ENCODE measurements at regions of chr2 and their contacts with region 1.

Region 1: GRCh38 chr2:135149251-135149650 is 97.2 kb downstream of the RAB3GAP1 start:
- DNase-seq: no peak
- H3K4me3 Mint-ChIP-seq: no peak overlapping the region
- H3K27ac Mint-ChIP-seq: no peak overlapping the region
- H3K4me1 Mint-ChIP-seq: peaks cover 4% of the 10 kb centered on the region
- H3K27me3 Mint-ChIP-seq: no peaks in the 10 kb centered on the region
- CTCF ChIP-seq: no peak

Region 2: GRCh38 chr2:135202756-135203155 is 53.5 kb after region 1 on chr2:
- CTCF ChIA-PET with region 1: interaction called, 10 read pairs
- intact Hi-C with region 1: no loop called
- DNase-seq: no peak
- H3K4me3 Mint-ChIP-seq: no peak overlapping the region
- H3K27ac Mint-ChIP-seq: no peak overlapping the region
- H3K4me1 Mint-ChIP-seq: no peaks in the 10 kb centered on the region
- H3K27me3 Mint-ChIP-seq: no peaks in the 10 kb centered on the region
- CTCF ChIP-seq: no peak